PC-9 (cell line): ENCODE measurements at regions of chr3 and their contacts with region 1.

Region 1: DNA sequence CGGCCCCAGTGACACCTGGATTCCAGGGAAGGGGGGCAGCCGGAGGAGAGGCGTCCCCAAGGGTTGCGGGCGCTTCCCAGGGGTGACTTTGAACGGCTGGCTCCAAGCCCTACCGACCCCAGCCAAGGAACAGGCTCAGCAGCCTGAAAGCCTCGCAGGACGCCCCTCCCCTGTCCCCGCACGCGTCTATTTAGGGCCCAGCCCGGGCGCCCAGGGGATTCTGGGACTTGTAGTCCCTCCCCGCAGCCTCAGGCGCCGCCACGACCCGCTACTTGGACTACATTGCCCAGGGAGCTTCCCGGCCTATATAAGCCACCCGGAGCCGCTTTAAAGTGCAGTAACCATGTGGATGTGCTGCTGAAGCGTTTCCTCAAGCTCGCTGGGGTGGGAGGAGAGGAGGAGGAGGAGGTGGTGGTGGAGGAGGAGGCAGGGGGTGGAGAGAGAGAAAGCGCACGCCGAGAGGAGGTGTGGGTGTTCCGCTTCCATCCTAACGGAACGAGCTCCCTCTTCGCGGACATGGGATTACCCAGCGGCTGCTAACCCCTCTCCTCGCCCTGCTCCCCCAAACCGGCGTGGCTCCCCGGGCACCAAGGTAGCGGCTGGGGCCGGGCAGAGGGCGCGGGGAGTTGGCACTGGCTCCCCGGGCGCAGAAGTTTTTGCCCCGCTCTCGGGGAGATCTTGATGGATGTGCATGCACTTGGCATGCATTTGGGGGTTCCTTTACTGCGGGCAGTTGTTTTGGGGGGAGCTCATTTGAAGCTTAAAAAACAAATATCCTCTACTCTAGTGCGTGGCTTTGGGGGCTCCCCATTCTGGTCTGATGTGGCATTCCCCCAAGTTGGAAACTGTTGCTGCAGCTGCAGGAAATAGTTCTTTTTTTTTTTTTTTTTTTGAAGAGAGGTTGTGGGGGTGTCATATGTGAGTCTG is at the start of gene ITPR1:
- DNase-seq: peak; percentile 88 to 97
- H3K4me3 ChIP-seq: peak within 1 kb of the TSS; percentile 75
- H3K27ac ChIP-seq: no peak within 1 kb of the TSS
- H3K4me1 ChIP-seq: peaks cover 4% of the 10 kb centered on the region; the same call in 1 of the 2 replicates
- H3K27me3 ChIP-seq: no peaks in the 10 kb centered on the region
- CTCF ChIP-seq: no peak
- total RNA-seq, gene ITPR1: 10.4 and 11.3 TPM in 2 replicates

Region 2: DNA sequence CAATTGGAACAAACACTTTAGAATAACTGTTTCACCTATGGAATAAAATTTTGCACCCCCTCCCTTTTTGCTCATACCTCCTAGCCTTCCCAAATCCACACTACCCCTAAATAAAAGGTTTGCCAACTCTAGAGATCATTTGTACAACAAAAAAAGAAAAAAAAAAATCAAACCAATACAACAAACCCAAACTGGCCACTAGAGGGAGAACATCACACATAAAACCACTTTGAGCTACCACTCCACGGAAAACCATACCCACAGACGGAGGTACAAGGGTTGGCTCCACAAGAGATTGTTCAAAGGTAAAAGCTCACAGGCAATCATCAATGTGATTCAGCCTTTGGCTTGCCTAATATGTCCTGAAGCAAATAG is 142.5 kb before region 1 on chr3:
- CTCF ChIA-PET with region 1: interaction called, 4 read pairs
- POLR2A ChIA-PET with region 1: no interaction called
- intact Hi-C with region 1: loop called (anchors 10 kb)
- DNase-seq: peak; percentile 10 to 33
- H3K4me3 ChIP-seq: no peak overlapping the region
- H3K27ac ChIP-seq: no peak overlapping the region
- H3K4me1 ChIP-seq: no peaks in the 10 kb centered on the region
- H3K27me3 ChIP-seq: no peaks in the 10 kb centered on the region
- CTCF ChIP-seq: peak; percentile 80

Region 3: DNA sequence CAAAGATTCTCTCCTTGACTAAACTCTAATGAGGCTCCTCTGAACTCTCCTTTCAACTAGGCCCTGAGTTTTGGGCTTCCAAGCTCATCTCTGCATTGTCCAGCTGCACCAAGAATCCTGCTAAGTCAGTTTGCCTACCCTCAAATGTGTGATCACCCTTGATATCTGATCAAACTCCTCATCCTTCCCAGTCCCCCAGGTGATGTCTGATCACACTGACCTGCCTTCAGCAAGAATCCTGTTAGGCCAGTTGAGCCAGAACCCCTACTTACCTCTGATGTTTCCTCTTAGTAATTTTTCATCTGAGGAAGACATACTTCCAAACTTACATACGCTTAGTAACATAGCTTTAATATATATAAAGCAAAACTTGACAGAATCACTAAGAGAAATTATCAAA is 55.0 kb before region 1 on chr3:
- CTCF ChIA-PET with region 1: no interaction called
- POLR2A ChIA-PET with region 1: interaction called, 3 read pairs
- intact Hi-C with region 1: loop called (anchors 1 kb)
- DNase-seq: peak; percentile 64 to 85
- H3K4me3 ChIP-seq: no peak overlapping the region
- H3K27ac ChIP-seq: peak overlapping the region; percentile 37
- H3K4me1 ChIP-seq: peaks cover 9% of the 10 kb centered on the region
- H3K27me3 ChIP-seq: no peaks in the 10 kb centered on the region
- CTCF ChIP-seq: no peak

Region 4: GRCh38 chr3:4524088-4525023 is 31.1 kb after region 1 on chr3:
- CTCF ChIA-PET with region 1: interaction called, 4 read pairs
- POLR2A ChIA-PET with region 1: no interaction called
- intact Hi-C with region 1: loop called (anchors 2 kb)
- DNase-seq: peak; percentile 63 to 91
- H3K4me3 ChIP-seq: no peak overlapping the region
- H3K27ac ChIP-seq: no peak overlapping the region
- H3K4me1 ChIP-seq: no peaks in the 10 kb centered on the region
- H3K27me3 ChIP-seq: no peaks in the 10 kb centered on the region
- CTCF ChIP-seq: no peak

Region 5: GRCh38 chr3:4633078-4634004 is 140.1 kb after region 1 on chr3:
- CTCF ChIA-PET with region 1: no interaction called
- POLR2A ChIA-PET with region 1: no interaction called
- intact Hi-C with region 1: loop called (anchors 5 kb)
- DNase-seq: peak; percentile 12 to 43
- H3K4me3 ChIP-seq: no peak overlapping the region
- H3K27ac ChIP-seq: no peak overlapping the region
- H3K4me1 ChIP-seq: no peaks in the 10 kb centered on the region
- H3K27me3 ChIP-seq: no peaks in the 10 kb centered on the region
- CTCF ChIP-seq: peak; percentile 77